ENCODE measurements at regions of chr12 and their contacts with region 1.

Region 1: GRCh38 chr12:46268590-46269558 is at the start of gene SLC38A1:
- DNase-seq: peak; percentile 77
- ATAC-seq: peak; percentile 71
- H3K4me3 Mint-ChIP-seq: no peak within 1 kb of the TSS
- H3K27ac Mint-ChIP-seq: no peak within 1 kb of the TSS
- H3K4me1 Mint-ChIP-seq: peaks cover 22% of the 10 kb centered on the region
- H3K27me3 Mint-ChIP-seq: no peaks in the 10 kb centered on the region
- CTCF ChIP-seq: no peak
- total RNA-seq, gene SLC38A1: 283 and 314 TPM in 2 replicates

Region 2: DNA sequence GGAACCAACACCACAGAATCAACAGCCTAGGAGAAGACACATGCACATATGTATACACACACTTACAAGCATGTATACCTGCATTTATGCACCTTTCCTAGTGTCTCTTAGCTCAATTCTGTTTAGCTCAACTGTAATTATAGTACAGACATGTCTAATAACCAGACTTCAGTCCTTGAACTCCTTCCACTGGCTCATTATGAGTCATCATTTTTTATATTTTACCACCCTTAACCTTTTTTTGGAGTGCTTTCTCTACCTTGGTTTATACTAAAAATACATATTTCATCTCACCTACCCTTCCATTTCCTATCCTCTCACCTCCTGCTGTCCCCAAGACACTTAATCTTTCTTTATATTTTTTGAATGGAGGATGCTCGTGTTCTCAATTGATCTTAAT is 429.0 kb before region 1 on chr12:
- CTCF ChIA-PET with region 1: no interaction called
- POLR2A ChIA-PET with region 1: no interaction called
- intact Hi-C with region 1: no loop called
- DNase-seq: no peak
- ATAC-seq: no peak
- H3K4me3 Mint-ChIP-seq: no peak overlapping the region
- H3K27ac Mint-ChIP-seq: no peak overlapping the region
- H3K4me1 Mint-ChIP-seq: no peaks in the 10 kb centered on the region
- H3K27me3 Mint-ChIP-seq: no peaks in the 10 kb centered on the region
- CTCF ChIP-seq: no peak

Region 3: DNA sequence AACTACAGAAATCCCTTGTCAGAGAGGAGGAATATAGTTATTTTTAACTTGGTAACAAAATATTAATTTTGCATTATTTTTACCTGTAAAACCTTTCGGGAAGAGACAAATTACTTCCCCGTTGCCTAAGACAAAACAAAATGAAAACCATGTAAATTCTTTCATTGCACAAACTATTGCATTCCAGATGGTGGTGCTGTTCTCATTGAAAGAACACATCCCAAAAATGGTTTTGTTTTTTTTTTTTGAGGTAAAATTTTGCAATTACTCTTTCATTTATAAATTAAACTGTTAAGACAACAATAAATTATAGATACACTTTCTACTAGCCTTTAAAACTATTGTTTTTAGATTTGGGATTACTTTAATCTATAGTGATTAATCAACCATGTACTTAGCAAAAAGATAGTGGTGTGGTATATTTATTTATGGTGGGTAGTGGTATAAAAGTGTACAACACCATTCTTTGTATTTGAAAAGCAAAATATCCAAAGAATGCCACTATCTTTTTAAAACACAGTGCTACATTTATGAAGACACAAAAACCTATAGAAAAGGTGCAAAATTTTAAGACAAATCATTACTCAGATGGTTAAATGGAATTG is 115.5 kb before region 1 on chr12:
- CTCF ChIA-PET with region 1: interaction called, 6 read pairs
- POLR2A ChIA-PET with region 1: interaction called, 14 read pairs
- intact Hi-C with region 1: loop called (anchors 2 kb)
- DNase-seq: no peak
- ATAC-seq: no peak
- H3K4me3 Mint-ChIP-seq: peak overlapping the region; percentile 4
- H3K27ac Mint-ChIP-seq: no peak overlapping the region
- H3K4me1 Mint-ChIP-seq: peaks cover 35% of the 10 kb centered on the region
- H3K27me3 Mint-ChIP-seq: peaks cover 1% of the 10 kb centered on the region
- CTCF ChIP-seq: no peak

Region 4: GRCh38 chr12:46168426-46168825 is 100.4 kb before region 1 on chr12:
- CTCF ChIA-PET with region 1: no interaction called
- POLR2A ChIA-PET with region 1: no interaction called
- intact Hi-C with region 1: no loop called
- DNase-seq: no peak
- ATAC-seq: no peak
- H3K4me3 Mint-ChIP-seq: no peak overlapping the region
- H3K27ac Mint-ChIP-seq: no peak overlapping the region
- H3K4me1 Mint-ChIP-seq: peaks cover 16% of the 10 kb centered on the region
- H3K27me3 Mint-ChIP-seq: no peaks in the 10 kb centered on the region
- CTCF ChIP-seq: no peak

Region 5: DNA sequence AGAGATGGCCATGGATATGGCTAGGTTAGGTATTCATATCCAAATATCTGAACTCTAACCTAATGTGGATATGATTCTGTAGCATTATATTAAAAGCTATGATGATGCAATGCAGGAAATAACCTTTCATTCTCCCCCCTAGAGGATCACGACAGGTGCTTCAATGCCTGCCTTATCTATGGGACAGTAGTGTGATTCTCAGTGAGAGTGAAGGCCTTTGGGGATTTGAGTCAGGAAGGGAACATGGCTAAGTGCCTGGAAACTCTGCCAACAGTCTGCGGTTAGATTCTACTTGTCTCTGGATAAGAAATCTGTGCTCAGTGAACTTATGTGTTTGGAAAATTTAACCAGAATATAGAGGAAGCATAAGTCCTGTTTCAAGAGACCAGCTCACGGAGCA is 81.9 kb before region 1 on chr12:
- CTCF ChIA-PET with region 1: no interaction called
- POLR2A ChIA-PET with region 1: interaction called, 10 read pairs
- intact Hi-C with region 1: no loop called
- DNase-seq: no peak
- ATAC-seq: peak; percentile 67
- H3K4me3 Mint-ChIP-seq: no peak overlapping the region
- H3K27ac Mint-ChIP-seq: peak overlapping the region; percentile 87
- H3K4me1 Mint-ChIP-seq: peaks cover 90% of the 10 kb centered on the region
- H3K27me3 Mint-ChIP-seq: no peaks in the 10 kb centered on the region
- CTCF ChIP-seq: no peak

Region 6: GRCh38 chr12:46246021-46246700 is 22.7 kb before region 1 on chr12:
- CTCF ChIA-PET with region 1: no interaction called
- POLR2A ChIA-PET with region 1: interaction called, 3 read pairs
- intact Hi-C with region 1: loop called (anchors 1 kb)
- DNase-seq: no peak
- ATAC-seq: no peak
- H3K4me3 Mint-ChIP-seq: peak overlapping the region; percentile 46
- H3K27ac Mint-ChIP-seq: peak overlapping the region; percentile 61
- H3K4me1 Mint-ChIP-seq: peaks cover 90% of the 10 kb centered on the region
- H3K27me3 Mint-ChIP-seq: no peaks in the 10 kb centered on the region
- CTCF ChIP-seq: no peak

Region 7: GRCh38 chr12:46382964-46383653 is 114.2 kb after region 1 on chr12:
- CTCF ChIA-PET with region 1: interaction called, 4 read pairs
- POLR2A ChIA-PET with region 1: interaction called, 23 read pairs
- intact Hi-C with region 1: loop called (anchors 1 kb)
- DNase-seq: peak; percentile 92
- ATAC-seq: peak; percentile 69
- H3K4me3 Mint-ChIP-seq: peak overlapping the region; percentile 91
- H3K27ac Mint-ChIP-seq: peak overlapping the region; percentile 94
- H3K4me1 Mint-ChIP-seq: peaks cover 46% of the 10 kb centered on the region
- H3K27me3 Mint-ChIP-seq: no peaks in the 10 kb centered on the region
- CTCF ChIP-seq: no peak

Region 8: GRCh38 chr12:46404225-46404631 is 135.4 kb after region 1 on chr12:
- CTCF ChIA-PET with region 1: no interaction called
- POLR2A ChIA-PET with region 1: no interaction called
- intact Hi-C with region 1: no loop called
- DNase-seq: no peak
- ATAC-seq: no peak
- H3K4me3 Mint-ChIP-seq: no peak overlapping the region
- H3K27ac Mint-ChIP-seq: no peak overlapping the region
- H3K4me1 Mint-ChIP-seq: peaks cover 48% of the 10 kb centered on the region
- H3K27me3 Mint-ChIP-seq: no peaks in the 10 kb centered on the region
- CTCF ChIP-seq: no peak

Region 9: DNA sequence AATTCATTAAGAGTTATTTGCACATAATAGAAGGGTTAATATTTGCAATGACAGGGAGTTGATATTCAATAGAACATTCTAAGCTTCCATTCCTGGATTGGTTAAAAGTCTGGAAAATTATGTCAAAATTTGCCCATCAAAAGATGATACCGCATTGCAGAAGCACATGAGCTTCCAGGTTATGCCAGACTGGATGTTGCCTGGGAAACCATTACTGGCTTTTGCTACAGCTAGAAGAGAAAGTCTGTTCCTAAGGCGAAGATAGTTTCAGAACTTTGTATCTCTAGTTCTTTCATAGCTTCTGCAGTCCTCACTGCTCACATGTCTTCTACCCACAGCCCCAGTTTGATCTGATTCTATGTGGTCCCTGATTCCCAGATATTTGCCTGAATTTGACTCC is 933.3 kb after region 1 on chr12:
- CTCF ChIA-PET with region 1: no interaction called
- POLR2A ChIA-PET with region 1: no interaction called
- intact Hi-C with region 1: no loop called
- DNase-seq: no peak
- ATAC-seq: no peak
- H3K4me3 Mint-ChIP-seq: no peak overlapping the region
- H3K27ac Mint-ChIP-seq: peak overlapping the region; percentile 63
- H3K4me1 Mint-ChIP-seq: peaks cover 72% of the 10 kb centered on the region
- H3K27me3 Mint-ChIP-seq: no peaks in the 10 kb centered on the region
- CTCF ChIP-seq: no peak

Region 10: GRCh38 chr12:47216150-47216677 is 947.3 kb after region 1 on chr12:
- CTCF ChIA-PET with region 1: no interaction called
- POLR2A ChIA-PET with region 1: interaction called, 5 read pairs
- intact Hi-C with region 1: loop called (anchors 5 kb)
- DNase-seq: peak; percentile 42
- ATAC-seq: peak; percentile 80
- H3K4me3 Mint-ChIP-seq: peak overlapping the region; percentile 88
- H3K27ac Mint-ChIP-seq: peak overlapping the region; percentile 96
- H3K4me1 Mint-ChIP-seq: peaks cover 77% of the 10 kb centered on the region
- H3K27me3 Mint-ChIP-seq: no peaks in the 10 kb centered on the region
- CTCF ChIP-seq: no peak

Measured in activated B cell treated with CpG ODN at 0.5 μM for 24 hours (primary cell).